MCF 10A (cell line): ENCODE measurements at regions of chr19 and their contacts with region 1.

Region 1: GRCh38 chr19:6372594-6373095 is at the start of gene ALKBH7:
- DNase-seq: peak; percentile 100
- H3K4me3 Mint-ChIP-seq: peak within 1 kb of the TSS; percentile 90
- H3K27ac Mint-ChIP-seq: peak within 1 kb of the TSS; percentile 81
- H3K4me1 Mint-ChIP-seq: peaks cover 20% of the 10 kb centered on the region
- H3K27me3 Mint-ChIP-seq: no peaks in the 10 kb centered on the region
- CTCF ChIP-seq: no peak
- total RNA-seq, gene ALKBH7: 49.9 and 51.5 TPM in 2 replicates

Region 2: DNA sequence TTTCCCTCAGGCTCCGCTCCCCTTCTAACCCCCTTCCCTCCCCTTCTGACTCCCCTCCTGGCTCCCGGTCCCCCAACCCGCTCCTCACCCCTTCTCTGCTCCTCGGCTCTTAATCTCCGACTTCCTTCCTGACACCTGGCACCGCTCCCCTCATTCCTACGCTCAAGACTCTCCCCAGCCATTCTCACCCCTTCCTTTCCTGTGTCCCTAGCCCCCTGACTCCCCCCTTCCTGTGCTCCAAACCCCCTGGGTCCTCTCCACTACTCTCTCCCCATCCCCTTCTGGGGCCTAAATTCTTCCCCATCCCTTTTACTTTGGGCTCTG is 10.7 kb before region 1 on chr19:
- CTCF ChIA-PET with region 1: interaction called, 6 read pairs
- POLR2A ChIA-PET with region 1: interaction called, 17 read pairs
- intact Hi-C with region 1: no loop called
- DNase-seq: no peak
- H3K4me3 Mint-ChIP-seq: peak overlapping the region; percentile 92
- H3K27ac Mint-ChIP-seq: peak overlapping the region; percentile 74
- H3K4me1 Mint-ChIP-seq: peaks cover 16% of the 10 kb centered on the region
- H3K27me3 Mint-ChIP-seq: no peaks in the 10 kb centered on the region
- CTCF ChIP-seq: no peak

Region 3: GRCh38 chr19:6393074-6393983 is 20.7 kb after region 1 on chr19 and contains the start of gene GTF2F1:
- CTCF ChIA-PET with region 1: no interaction called
- POLR2A ChIA-PET with region 1: interaction called, 13 read pairs
- intact Hi-C with region 1: no loop called
- DNase-seq: peak; percentile 93
- H3K4me3 Mint-ChIP-seq: peak within 1 kb of the TSS; percentile 89
- H3K27ac Mint-ChIP-seq: peak within 1 kb of the TSS; percentile 95
- H3K4me1 Mint-ChIP-seq: peaks cover 18% of the 10 kb centered on the region
- H3K27me3 Mint-ChIP-seq: no peaks in the 10 kb centered on the region
- CTCF ChIP-seq: no peak
- total RNA-seq, gene GTF2F1: 65.6 and 84.8 TPM in 2 replicates